ENCODE measurements at regions of chr12 and their contacts with region 1.

Region 1: DNA sequence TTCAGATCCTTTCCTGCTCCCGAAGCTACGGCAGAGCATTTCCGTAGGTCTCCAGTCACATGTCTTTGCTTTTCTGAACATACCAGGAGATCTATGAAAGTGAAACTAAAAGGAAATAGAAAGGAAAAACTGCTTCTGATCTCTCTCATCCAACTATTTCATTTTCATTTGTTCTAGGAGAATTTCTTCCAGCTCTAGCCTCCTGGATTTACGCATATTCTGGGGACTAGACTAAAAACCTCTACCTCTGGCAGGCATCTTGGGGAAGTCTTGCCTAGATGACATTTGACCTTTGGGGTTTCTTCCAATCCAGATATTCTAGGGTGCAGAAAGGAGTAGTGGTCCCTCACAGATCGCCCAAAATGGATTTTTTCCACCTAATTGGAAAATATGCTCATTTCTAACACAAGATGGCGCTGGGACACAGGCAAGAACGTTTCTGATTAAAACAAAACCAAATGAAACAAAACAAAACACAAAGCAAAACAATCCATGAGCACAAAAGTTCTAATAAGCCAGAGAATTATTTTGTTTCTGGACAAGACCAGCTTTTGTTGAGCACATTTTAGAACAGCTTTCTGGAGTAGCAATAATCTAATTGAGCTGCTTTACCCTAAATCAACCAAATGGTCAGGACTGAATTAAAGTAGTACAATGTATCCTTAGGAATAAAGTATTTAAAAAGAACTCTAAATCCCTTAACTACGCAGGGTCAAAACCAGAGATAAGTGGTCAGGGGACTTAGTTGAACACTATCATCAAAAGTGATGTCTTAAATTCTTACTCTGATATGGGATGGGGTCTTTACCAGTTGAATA is 12.3 kb upstream of the PARP11 start:
- DNase-seq: peak in 3 of 4 donors; percentile 18 to 24 (median 18)
- ATAC-seq: peak; percentile 50
- H3K4me3 ChIP-seq: no peak overlapping the region
- H3K27ac ChIP-seq: peak overlapping the region in 1 of 4 donors; percentile 36
- H3K4me1 ChIP-seq: no peaks in the 10 kb centered on the region
- H3K27me3 ChIP-seq: no peaks in the 10 kb centered on the region
- CTCF ChIP-seq: peak; percentile 66 to 88 (median 83)
- POLR2A ChIP-seq: no peak

Region 2: GRCh38 chr12:3350422-3350821 is 535.1 kb before region 1 on chr12:
- intact Hi-C with region 1: no loop called
- DNase-seq: no peak
- ATAC-seq: no peak
- H3K4me3 ChIP-seq: no peak overlapping the region
- H3K27ac ChIP-seq: no peak overlapping the region
- H3K4me1 ChIP-seq: peaks cover 16% of the 10 kb centered on the region
- H3K27me3 ChIP-seq: no peaks in the 10 kb centered on the region
- CTCF ChIP-seq: no peak
- POLR2A ChIP-seq: no peak

Region 3: GRCh38 chr12:4030929-4031702 is 145.6 kb after region 1 on chr12:
- intact Hi-C with region 1: loop called (anchors 10 kb)
- DNase-seq: peak; percentile 93 to 95 (median 95)
- ATAC-seq: peak; percentile 98
- H3K4me3 ChIP-seq: no peak overlapping the region
- H3K27ac ChIP-seq: peak overlapping the region; percentile 81 to 95 (median 89)
- H3K4me1 ChIP-seq: peaks cover 57% of the 10 kb centered on the region
- H3K27me3 ChIP-seq: no peaks in the 10 kb centered on the region
- CTCF ChIP-seq: peak in 4 of 7 experiments; percentile 3 to 41 (median 23)
- POLR2A ChIP-seq: peak; percentile 59 to 79 (median 70)

Measured in body of pancreas (tissue), 4 donors.